Heart left ventricle (tissue), 16 donors: ENCODE measurements at regions of chr5 and their contacts with region 1.

Region 1: GRCh38 chr5:61817472-61818326 is 485.6 kb downstream of the ZSWIM6 start:
- DNase-seq: peak in 3 of 5 donors; percentile 19 to 27 (median 27)
- ATAC-seq: peak in 2 of 4 donors; percentile 48 to 65
- H3K4me3 ChIP-seq: no peak overlapping the region
- H3K27ac ChIP-seq: no peak overlapping the region
- H3K4me1 ChIP-seq: peaks cover 0 to 6% (median 0%) of the 10 kb centered on the region in 12 donors
- H3K27me3 ChIP-seq: peaks cover 0 to 40% (median 5%) of the 10 kb centered on the region in 9 donors
- CTCF ChIP-seq: peak in 11 of 12 donors; percentile 35 to 69 (median 54)
- POLR2A ChIP-seq: no peak

Region 2: DNA sequence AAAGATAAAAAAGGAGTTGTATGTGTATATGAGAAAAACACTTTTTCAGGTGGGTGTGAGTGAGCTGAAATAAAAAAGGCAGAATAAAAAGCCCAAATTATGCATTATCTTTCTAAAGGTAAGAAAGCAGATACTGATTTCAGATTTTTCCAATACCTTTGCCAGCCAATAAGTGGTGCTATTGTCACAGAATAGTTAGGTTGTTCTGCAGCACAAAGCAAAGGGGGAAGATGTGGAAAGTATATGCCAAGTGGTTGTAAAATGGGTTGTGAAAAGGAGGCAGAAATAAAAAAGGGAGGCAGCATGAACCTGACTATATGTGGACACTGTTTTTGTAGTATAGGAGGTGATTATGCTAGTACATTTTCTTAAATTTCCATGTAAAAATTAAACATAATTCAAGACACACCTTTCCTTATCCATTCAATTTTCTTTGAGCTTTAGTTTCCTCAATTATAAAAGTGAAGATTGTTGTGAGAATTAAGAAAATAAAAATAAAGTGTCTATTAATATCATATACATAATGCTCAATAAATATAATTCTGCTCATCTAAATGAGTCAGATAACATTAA is 762.2 kb before region 1 on chr5:
- intact Hi-C with region 1: loop called in 6 of 10 experiments (anchors 5 to 10 kb)
- DNase-seq: no peak
- ATAC-seq: no peak
- H3K4me3 ChIP-seq: no peak overlapping the region
- H3K27ac ChIP-seq: no peak overlapping the region
- H3K4me1 ChIP-seq: peaks cover 0 to 3% (median 0%) of the 10 kb centered on the region in 12 donors
- H3K27me3 ChIP-seq: no peaks in the 10 kb centered on the region
- CTCF ChIP-seq: peak; percentile 36 to 69 (median 58)
- POLR2A ChIP-seq: no peak

Region 3: GRCh38 chr5:61200582-61201155 is 617.0 kb before region 1 on chr5:
- intact Hi-C with region 1: no loop called
- DNase-seq: no peak
- ATAC-seq: no peak
- H3K4me3 ChIP-seq: no peak overlapping the region
- H3K27ac ChIP-seq: no peak overlapping the region
- H3K4me1 ChIP-seq: no peaks in the 10 kb centered on the region
- H3K27me3 ChIP-seq: peaks cover 0 to 2% (median 0%) of the 10 kb centered on the region in 9 donors
- CTCF ChIP-seq: no peak
- POLR2A ChIP-seq: no peak

Region 4: GRCh38 chr5:61277781-61278180 is 539.9 kb before region 1 on chr5:
- intact Hi-C with region 1: loop called in 1 of 10 experiments (anchors 2 kb)
- DNase-seq: no peak
- ATAC-seq: no peak
- H3K4me3 ChIP-seq: peak overlapping the region in 1 of 12 donors; percentile 28
- H3K27ac ChIP-seq: peak overlapping the region in 2 of 12 donors; percentile 50 to 83
- H3K4me1 ChIP-seq: peaks cover 0 to 79% (median 7%) of the 10 kb centered on the region in 12 donors
- H3K27me3 ChIP-seq: no peaks in the 10 kb centered on the region
- CTCF ChIP-seq: no peak
- POLR2A ChIP-seq: no peak

Region 5: GRCh38 chr5:61732369-61732768 is 85.3 kb before region 1 on chr5:
- intact Hi-C with region 1: no loop called
- DNase-seq: no peak
- ATAC-seq: no peak
- H3K4me3 ChIP-seq: peak overlapping the region in 4 of 12 donors; percentile 0 to 22 (median 6)
- H3K27ac ChIP-seq: no peak overlapping the region
- H3K4me1 ChIP-seq: peaks cover 0 to 7% (median 0%) of the 10 kb centered on the region in 12 donors
- H3K27me3 ChIP-seq: peaks cover 0 to 28% (median 0%) of the 10 kb centered on the region in 9 donors
- CTCF ChIP-seq: no peak
- POLR2A ChIP-seq: no peak